Dorsolateral prefrontal cortex (tissue), 120 donors: ENCODE measurements at regions of chr15 and their contacts with region 1.

Region 1: DNA sequence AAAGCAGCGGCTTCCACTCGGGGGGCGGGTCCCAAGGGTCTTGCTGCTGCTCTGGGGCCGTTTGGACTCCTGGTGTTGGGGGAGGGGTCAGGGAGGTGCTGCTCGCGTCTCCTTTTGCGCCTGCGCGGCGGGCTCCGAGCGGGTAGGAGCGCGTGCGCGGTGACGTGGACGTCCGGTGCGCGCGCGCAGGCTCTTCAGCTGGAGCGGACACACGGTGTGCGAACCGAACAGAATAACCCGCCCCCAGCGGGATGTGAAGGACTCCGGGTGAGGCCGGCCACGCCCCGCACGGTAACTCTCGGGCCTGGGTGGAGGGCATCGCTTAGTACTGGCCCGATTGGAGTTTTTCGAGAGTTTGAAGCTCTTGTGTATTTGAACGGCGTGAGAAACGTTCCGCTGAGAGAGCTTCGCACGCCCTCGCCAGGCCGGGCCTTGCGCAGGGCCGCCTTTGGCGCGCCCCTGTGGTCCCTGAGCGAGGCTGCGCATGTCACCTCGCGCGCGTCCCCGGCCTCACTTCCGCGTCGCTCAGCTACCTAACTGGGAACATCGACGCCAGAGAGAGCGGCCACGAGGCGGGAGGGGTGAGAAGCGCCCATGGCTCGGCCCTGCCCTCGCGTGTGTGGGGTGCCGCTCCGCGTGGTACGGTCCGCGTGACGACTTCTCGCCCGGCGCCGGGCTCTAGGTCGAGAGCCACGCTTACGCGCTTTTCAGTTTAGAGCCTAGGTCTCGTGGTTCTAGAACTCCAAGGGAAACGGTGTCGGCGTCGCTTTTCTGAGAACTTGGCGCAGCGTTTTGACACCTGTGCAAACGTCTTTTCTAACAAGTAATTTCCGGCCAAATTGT is at the start of gene MGA:
- DNase-seq: peak; percentile 70 to 89 (median 78)
- H3K4me3 ChIP-seq: peak within 1 kb of the TSS; percentile 43 to 83 (median 69)
- H3K27ac ChIP-seq: peak within 1 kb of the TSS; percentile 29 to 93 (median 83)
- H3K27me3 ChIP-seq: no peaks in the 10 kb centered on the region
- CTCF ChIP-seq: peak in 46 of 56 donors; percentile 11 to 64 (median 42)
- total RNA-seq, gene MGA: 63.5 to 108 (median 82.2) TPM

Region 2: GRCh38 chr15:41585127-41586047 is 75.1 kb before region 1 on chr15:
- intact Hi-C with region 1: no loop called
- DNase-seq: peak in 9 of 10 donors; percentile 54 to 77 (median 58)
- H3K4me3 ChIP-seq: peak overlapping the region; percentile 10 to 72 (median 56)
- H3K27ac ChIP-seq: peak overlapping the region; percentile 43 to 97 (median 92)
- H3K27me3 ChIP-seq: no peaks in the 10 kb centered on the region
- CTCF ChIP-seq: peak in 49 of 56 donors; percentile 16 to 67 (median 41)

Region 3: DNA sequence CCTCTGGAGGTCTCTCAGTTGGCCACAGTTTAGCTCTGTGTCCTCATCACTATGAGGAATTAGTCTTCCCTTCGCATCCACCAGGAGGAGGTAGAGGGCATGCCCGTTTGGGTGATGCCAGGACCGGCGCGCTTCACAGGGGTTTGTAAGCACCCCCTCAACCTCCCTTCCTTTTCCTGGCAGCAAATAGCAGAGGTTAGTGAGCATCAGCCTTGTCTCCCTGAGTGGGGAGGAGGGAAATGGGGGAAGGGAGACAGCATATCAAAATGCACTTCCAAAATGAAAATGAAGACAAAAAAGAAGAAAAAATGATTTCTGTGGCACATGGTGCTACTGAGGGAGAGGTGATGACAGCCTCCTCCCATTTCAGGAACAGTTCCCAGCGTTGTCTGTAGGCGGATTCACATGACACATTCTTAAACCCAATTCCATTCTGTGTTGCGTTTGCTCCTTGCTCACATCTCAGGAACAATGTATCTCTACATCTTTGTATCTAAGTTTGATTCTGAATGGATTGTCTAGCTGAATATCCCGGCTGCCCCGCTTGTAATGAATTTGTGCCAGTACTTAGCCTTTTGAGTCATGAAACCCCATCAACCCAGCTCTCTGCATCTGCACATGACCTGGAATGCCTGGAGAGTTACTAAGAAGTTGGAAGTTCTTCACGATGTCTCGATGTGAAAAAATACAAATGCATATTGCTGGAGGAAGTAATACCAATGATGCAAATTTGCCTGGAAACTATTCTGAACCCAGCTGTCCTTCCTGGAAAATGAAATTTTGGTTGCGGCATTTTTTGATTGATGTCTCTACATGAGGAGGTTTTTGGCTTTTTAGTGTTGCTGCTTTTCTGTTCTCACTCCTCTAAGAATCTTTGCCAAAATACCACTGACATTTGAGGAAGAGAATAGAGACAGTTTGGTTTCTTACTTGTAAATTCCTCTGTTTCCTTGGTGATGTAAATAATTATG is 56.2 kb before region 1 on chr15:
- intact Hi-C with region 1: loop called in 1 of 2 experiments (anchors 10 kb)
- DNase-seq: peak; percentile 39 to 80 (median 61)
- H3K4me3 ChIP-seq: peak overlapping the region in 55 of 59 donors; percentile 2 to 62 (median 40)
- H3K27ac ChIP-seq: peak overlapping the region in 52 of 59 donors; percentile 3 to 83 (median 54)
- H3K27me3 ChIP-seq: no peaks in the 10 kb centered on the region
- CTCF ChIP-seq: peak; percentile 46 to 86 (median 74)